ENCODE measurements at regions of chr3 and their contacts with region 1.

Region 1: DNA sequence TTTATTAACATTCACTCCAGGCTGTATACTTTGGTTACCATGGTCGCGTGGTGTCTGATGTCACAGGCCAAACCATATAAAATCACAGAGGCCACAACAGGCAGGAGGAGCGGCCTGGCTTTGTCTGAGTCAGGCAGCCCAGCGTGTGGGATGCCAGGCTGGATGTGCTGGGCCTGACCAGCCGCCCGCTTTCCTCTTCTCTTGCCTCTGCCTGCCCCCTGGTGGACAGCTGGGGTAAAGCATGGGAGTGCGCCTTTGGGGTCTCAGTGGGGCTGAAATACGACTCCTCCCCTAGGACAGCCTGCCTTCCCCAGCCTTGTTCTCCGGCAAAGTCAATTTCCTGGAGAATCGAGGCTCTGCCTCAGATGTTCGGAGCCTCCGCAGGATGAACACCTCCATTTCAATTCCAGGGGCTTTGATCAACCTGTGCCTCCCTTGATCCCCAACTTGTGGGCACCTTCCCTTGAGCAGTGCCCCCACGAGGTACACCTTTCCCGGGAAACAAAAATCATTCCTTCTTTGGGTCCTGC is 78.2 kb downstream of the CCNL1 start:
- DNase-seq: peak; percentile 86 to 100
- H3K4me3 ChIP-seq: no peak overlapping the region; a peak in 1 of 8 replicates
- H3K27ac ChIP-seq: no peak overlapping the region
- H3K4me1 ChIP-seq: peaks cover 0 to 4% (median 2%) of the 10 kb centered on the region in 4 experiments; a peak in 2 of 7 replicates
- H3K27me3 ChIP-seq: peaks cover 0 to 4% (median 0%) of the 10 kb centered on the region in 4 experiments; a peak in 3 of 7 replicates
- CTCF ChIP-seq: peak; percentile 92 to 100 (median 95)
- EP300 ChIP-seq: peak in 1 of 2 experiments; percentile 33; a peak in 1 of 3 replicates
- POLR2A ChIP-seq: 0 out of 3 replicates have a peak, but pooled peaks of 1 of the 2 experiments have one; percentile 31
- RAD21 ChIP-seq: peak; percentile 99 to 100

Region 2: DNA sequence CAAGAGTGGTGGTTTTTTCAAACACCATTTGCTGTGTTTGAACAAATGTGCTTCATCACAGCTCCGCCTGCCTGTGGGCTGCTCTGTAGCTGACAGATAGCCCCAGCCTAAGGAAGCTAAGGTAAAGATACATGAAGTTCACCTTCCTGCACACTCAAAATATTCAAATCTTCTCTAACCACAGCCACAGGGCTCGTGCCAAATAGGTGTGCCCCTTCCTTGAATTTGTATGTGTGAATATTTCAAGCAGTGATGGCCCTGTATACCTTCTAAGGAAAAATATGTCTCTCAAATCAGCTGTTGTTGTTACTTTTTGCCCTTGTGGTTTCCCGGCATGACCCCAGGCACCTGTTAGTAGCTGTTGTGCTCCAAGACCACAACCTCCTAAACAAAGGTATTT is 14.6 kb before region 1 on chr3:
- CTCF ChIA-PET with region 1: interaction called, 14 read pairs
- POLR2A ChIA-PET with region 1: interaction called, 9 read pairs
- DNase-seq: no peak
- H3K4me3 ChIP-seq: no peak overlapping the region
- H3K27ac ChIP-seq: no peak overlapping the region
- H3K4me1 ChIP-seq: peaks cover 5 to 15% (median 9%) of the 10 kb centered on the region in 4 experiments
- H3K27me3 ChIP-seq: peaks cover 0 to 6% (median 3%) of the 10 kb centered on the region in 4 experiments; a peak in 3 of 7 replicates
- CTCF ChIP-seq: no peak
- EP300 ChIP-seq: no peak
- POLR2A ChIP-seq: no peak
- RAD21 ChIP-seq: no peak

Region 3: GRCh38 chr3:157130467-157131251 is 48.9 kb after region 1 on chr3:
- CTCF ChIA-PET with region 1: interaction called, 1,014 read pairs
- POLR2A ChIA-PET with region 1: no interaction called
- DNase-seq: peak; percentile 54 to 82
- H3K4me3 ChIP-seq: peak overlapping the region in 2 of 4 experiments; percentile 9 to 45; a peak in 3 of 8 replicates
- H3K27ac ChIP-seq: peak overlapping the region; percentile 68; the same call in 1 of the 2 replicates
- H3K4me1 ChIP-seq: peaks cover 5 to 15% (median 9%) of the 10 kb centered on the region in 4 experiments; a peak in 6 of 7 replicates
- H3K27me3 ChIP-seq: no peaks in the 10 kb centered on the region; a peak in 2 of 7 replicates
- CTCF ChIP-seq: peak; percentile 39 to 76 (median 52)
- EP300 ChIP-seq: no peak
- POLR2A ChIP-seq: peak in 1 of 2 experiments; percentile 32; a peak in 1 of 3 replicates
- RAD21 ChIP-seq: peak; percentile 82 to 83

Region 4: DNA sequence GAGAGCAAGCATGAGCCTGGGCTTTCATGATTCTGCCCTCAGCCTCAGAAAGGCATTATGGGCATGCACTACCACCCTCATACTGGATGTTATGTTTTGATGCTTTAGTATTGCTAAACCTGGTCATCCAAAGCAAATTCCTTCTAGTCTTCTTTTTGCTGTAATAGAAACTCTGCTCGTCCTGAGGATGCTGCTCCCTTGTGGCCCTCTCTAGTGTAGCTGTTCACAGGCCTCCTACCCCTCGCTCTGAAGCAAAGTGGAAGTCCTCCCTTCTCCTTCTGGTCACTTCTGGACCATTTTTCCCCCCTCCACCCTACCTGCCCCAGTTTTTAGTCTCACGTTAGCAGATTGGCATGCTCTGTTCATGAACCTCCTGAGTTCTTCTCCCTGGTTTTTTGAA is 101.1 kb after region 1 on chr3:
- CTCF ChIA-PET with region 1: no interaction called
- POLR2A ChIA-PET with region 1: no interaction called
- DNase-seq: no peak
- H3K4me3 ChIP-seq: no peak overlapping the region
- H3K27ac ChIP-seq: no peak overlapping the region
- H3K4me1 ChIP-seq: no peaks in the 10 kb centered on the region
- H3K27me3 ChIP-seq: no peaks in the 10 kb centered on the region; a peak in 1 of 7 replicates
- CTCF ChIP-seq: peak in 1 of 3 experiments; percentile 1; a peak in 1 of 4 replicates
- EP300 ChIP-seq: no peak
- POLR2A ChIP-seq: no peak
- RAD21 ChIP-seq: no peak

Region 5: GRCh38 chr3:157335198-157336076 is 253.7 kb after region 1 on chr3:
- CTCF ChIA-PET with region 1: no interaction called
- POLR2A ChIA-PET with region 1: no interaction called
- DNase-seq: peak in 1 of 2 experiments; percentile 51
- H3K4me3 ChIP-seq: peak overlapping the region in 1 of 4 experiments; percentile 11; a peak in 1 of 8 replicates
- H3K27ac ChIP-seq: no peak overlapping the region
- H3K4me1 ChIP-seq: peaks cover 0 to 10% (median 6%) of the 10 kb centered on the region in 4 experiments
- H3K27me3 ChIP-seq: no peaks in the 10 kb centered on the region
- CTCF ChIP-seq: no peak
- EP300 ChIP-seq: no peak
- POLR2A ChIP-seq: no peak
- RAD21 ChIP-seq: no peak

Measured in H1 (cell line).